Left cardiac atrium (tissue), 4 donors: ENCODE measurements at regions of chr7 and their contacts with region 1.

Region 1: GRCh38 chr7:155598810-155599210 is 45.7 kb upstream of the RBM33 start:
- DNase-seq: peak; percentile 82
- ATAC-seq: peak; percentile 61 to 79

Region 2: DNA sequence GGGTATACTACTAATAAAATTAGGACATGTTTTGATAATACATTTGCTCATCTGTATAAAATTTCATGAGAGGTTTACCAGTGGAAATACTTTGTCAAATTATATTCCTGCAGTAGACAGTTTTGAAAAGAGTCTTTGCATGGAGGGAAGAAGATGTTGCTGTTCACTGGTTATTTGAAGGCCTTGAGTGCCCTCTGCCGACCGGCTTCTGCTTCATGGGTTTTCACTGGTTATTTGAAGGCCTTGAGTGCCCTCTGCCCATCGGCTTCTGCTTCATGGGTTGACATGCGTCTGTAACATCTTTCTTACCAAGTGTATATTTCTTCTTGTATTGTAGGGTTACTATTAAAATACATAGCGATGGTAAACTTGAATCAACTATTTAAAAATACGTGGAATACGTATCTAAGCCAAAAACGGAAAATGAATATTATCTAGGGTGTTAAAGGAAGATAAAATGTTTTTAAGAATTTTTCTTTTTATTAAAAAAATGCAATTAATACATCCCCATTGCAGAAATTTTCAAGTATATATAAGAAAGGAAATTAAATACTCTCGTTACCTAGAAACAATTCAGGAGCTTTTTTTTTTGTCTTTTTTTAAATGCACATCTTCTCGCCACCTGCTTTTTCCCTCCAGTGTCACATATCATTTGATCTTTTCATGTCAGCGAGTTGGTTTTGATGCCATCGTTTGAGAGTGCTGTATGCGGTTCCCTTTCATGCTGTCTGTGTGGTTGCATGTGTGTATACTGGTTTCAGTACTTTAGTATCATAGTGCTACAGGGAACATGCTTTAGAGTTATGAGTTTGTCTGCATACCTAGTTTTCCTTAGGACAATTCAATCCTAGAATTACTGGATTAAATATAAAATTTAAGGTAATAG is 140.1 kb after region 1 on chr7:
- intact Hi-C with region 1: loop called (anchors 1 to 10 kb)
- DNase-seq: peak; percentile 71
- ATAC-seq: peak; percentile 82 to 85

Region 3: DNA sequence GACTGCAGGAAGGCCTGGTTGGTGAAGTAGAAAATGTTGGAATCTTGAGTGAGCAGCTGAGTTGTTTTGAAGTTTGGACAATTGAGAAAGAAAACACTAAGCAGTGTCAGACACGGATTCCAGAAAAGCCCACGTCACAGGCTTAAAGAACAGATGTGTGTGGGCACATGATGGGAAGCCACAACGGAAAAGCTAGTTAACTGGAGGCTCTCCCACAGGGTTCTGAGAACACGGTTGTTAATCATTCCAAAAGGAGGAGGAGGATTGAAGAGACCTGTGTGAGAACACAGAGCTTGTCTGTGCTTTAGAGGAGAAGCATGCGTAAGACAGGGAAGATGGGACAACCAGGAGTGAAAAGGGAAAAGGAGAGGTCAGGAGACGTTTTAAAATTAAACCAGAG is 170.9 kb after region 1 on chr7:
- intact Hi-C with region 1: loop called in 1 of 2 experiments (anchors 2 kb)
- DNase-seq: no peak
- ATAC-seq: no peak